ENCODE measurements at regions of chr10 and their contacts with region 1.

Region 1: GRCh38 chr10:118800920-118801319 is 46.1 kb upstream of the CACUL1 start:
- DNase-seq: peak; percentile 26
- H3K4me3 ChIP-seq: no peak overlapping the region
- H3K27ac ChIP-seq: no peak overlapping the region
- H3K4me1 ChIP-seq: peaks cover 20% of the 10 kb centered on the region
- H3K27me3 ChIP-seq: no peaks in the 10 kb centered on the region
- CTCF ChIP-seq: peak; percentile 51 to 68

Region 2: GRCh38 chr10:118720685-118721538 is 80.0 kb before region 1 on chr10:
- CTCF ChIA-PET with region 1: interaction called, 30 read pairs
- dilution Hi-C with region 1: no loop called
- in situ Hi-C with region 1: no loop called
- intact Hi-C with region 1: loop called (anchors 5 kb)
- DNase-seq: peak; percentile 31
- H3K4me3 ChIP-seq: no peak overlapping the region
- H3K27ac ChIP-seq: no peak overlapping the region
- H3K4me1 ChIP-seq: no peaks in the 10 kb centered on the region
- H3K27me3 ChIP-seq: no peaks in the 10 kb centered on the region
- CTCF ChIP-seq: peak; percentile 69 to 73